ENCODE measurements at regions of chr12 and their contacts with region 1.

Region 1: GRCh38 chr12:51238510-51239334 is at the start of gene DAZAP2:
- DNase-seq: peak; percentile 92
- H3K4me3 Mint-ChIP-seq: peak within 1 kb of the TSS; percentile 93
- H3K27ac Mint-ChIP-seq: peak within 1 kb of the TSS; percentile 100
- H3K4me1 Mint-ChIP-seq: peaks cover 31% of the 10 kb centered on the region
- H3K27me3 Mint-ChIP-seq: peaks cover 5% of the 10 kb centered on the region
- total RNA-seq, gene DAZAP2: 151 and 152 TPM in 2 replicates

Region 2: DNA sequence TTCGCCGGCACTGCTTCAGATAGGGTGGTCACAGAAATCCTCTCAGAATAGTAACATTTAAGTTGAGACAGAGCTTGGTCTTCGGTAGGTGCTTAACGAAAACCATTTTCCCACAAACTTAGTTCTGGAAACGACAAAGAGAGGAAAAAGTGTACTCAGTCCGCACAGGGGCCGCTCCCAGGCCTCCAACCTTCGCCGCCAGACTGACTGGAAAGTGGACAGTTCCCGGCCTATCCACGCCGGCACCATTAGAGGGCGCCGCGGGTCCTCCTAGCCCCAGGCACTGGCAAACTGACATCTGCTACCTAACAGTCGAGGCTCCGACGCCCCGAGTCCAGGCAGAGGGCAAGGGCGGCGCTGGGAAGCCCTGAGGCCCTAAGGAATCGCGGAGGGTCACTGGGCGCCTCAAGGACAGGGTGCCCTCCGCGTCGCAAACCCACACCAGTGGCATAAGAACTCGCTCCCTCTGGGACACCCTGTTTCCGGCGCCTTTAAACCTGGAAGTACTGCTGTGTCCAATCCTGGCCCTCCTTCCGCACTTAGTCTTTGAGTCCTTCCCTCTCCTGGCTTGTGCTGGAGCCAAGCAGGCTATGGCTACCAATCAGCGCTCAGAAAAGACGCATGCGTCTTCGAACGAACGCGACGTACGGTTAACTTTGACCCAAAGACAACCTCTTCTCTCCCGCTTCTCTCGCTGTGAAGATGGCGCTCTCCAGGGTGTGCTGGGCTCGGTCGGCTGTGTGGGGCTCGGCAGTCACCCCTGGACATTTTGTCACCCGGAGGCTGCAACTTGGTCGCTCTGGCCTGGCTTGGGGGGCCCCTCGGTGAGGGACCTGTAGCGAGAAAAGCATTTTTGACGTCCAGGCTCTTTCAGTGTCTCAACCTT is 190.8 kb before region 1 on chr12 and contains the start of gene LETMD1:
- intact Hi-C with region 1: loop called (anchors 1 kb)
- DNase-seq: peak; percentile 92
- H3K4me3 Mint-ChIP-seq: peak within 1 kb of the TSS; percentile 92
- H3K27ac Mint-ChIP-seq: peak within 1 kb of the TSS; percentile 83
- H3K4me1 Mint-ChIP-seq: peaks cover 22% of the 10 kb centered on the region
- H3K27me3 Mint-ChIP-seq: no peaks in the 10 kb centered on the region
- total RNA-seq, gene LETMD1: 61.0 and 63.1 TPM in 2 replicates

Region 3: GRCh38 chr12:51172515-51173431 is 65.9 kb before region 1 on chr12 and contains the start of gene TFCP2:
- intact Hi-C with region 1: loop called (anchors 5 kb)
- DNase-seq: peak; percentile 93
- H3K4me3 Mint-ChIP-seq: peak within 1 kb of the TSS; percentile 80
- H3K27ac Mint-ChIP-seq: peak within 1 kb of the TSS; percentile 71
- H3K4me1 Mint-ChIP-seq: peaks cover 10% of the 10 kb centered on the region
- H3K27me3 Mint-ChIP-seq: no peaks in the 10 kb centered on the region
- total RNA-seq, gene TFCP2: 42.2 and 44.2 TPM in 2 replicates

Region 4: DNA sequence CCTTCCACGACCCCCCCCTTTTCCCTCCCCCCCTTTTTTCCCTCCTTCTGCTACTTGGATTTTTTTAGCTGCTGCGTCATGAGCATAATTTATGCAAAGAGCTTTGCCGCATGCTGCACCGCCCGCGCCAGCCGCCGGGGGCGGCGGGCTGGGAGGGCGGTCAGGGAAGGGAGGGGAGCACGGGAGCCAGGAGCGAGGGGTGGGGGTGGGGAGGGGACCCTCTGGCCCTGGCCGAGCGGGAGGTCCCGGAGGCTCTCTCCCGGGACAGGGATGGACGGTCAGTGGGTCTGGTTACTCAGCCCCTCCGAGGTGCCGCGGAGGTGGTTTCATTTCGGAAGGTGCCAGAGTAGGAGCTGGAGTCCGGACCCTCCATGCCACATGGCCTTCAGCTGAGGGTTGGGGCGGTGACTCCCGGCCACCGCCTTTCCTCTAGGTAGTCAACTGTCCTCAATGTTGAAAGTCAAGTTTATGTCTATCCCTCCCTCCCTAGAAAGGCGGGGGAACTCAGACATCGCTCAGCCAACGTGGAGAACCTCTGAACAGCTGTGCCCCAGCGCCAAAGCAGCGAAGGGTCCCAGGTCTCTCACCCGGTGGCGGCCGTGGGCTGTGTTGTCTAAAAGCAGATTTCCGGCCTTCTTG is 20.6 kb before region 1 on chr12 and contains the start of gene POU6F1:
- intact Hi-C with region 1: loop called (anchors 1 kb)
- DNase-seq: peak; percentile 57
- H3K4me3 Mint-ChIP-seq: peak within 1 kb of the TSS; percentile 71
- H3K27ac Mint-ChIP-seq: peak within 1 kb of the TSS; percentile 71
- H3K4me1 Mint-ChIP-seq: peaks cover 13% of the 10 kb centered on the region
- H3K27me3 Mint-ChIP-seq: no peaks in the 10 kb centered on the region
- total RNA-seq, gene POU6F1: 4.9 and 5.5 TPM in 2 replicates

Measured in activated T-helper 2 cell treated with anti-CD3 and anti-CD28 coated beads, Interferon-gamma antibody, Interleukin-2, Interleukin-4, amounts not matched to agents 10 μg/mL and 5 μg/mL and 100 μg/mL, durations not matched to agents 14 hours and 24 hours and 36 hours (primary cell).